ENCODE measurements at regions of chr11 and their contacts with region 1.

Region 1: DNA sequence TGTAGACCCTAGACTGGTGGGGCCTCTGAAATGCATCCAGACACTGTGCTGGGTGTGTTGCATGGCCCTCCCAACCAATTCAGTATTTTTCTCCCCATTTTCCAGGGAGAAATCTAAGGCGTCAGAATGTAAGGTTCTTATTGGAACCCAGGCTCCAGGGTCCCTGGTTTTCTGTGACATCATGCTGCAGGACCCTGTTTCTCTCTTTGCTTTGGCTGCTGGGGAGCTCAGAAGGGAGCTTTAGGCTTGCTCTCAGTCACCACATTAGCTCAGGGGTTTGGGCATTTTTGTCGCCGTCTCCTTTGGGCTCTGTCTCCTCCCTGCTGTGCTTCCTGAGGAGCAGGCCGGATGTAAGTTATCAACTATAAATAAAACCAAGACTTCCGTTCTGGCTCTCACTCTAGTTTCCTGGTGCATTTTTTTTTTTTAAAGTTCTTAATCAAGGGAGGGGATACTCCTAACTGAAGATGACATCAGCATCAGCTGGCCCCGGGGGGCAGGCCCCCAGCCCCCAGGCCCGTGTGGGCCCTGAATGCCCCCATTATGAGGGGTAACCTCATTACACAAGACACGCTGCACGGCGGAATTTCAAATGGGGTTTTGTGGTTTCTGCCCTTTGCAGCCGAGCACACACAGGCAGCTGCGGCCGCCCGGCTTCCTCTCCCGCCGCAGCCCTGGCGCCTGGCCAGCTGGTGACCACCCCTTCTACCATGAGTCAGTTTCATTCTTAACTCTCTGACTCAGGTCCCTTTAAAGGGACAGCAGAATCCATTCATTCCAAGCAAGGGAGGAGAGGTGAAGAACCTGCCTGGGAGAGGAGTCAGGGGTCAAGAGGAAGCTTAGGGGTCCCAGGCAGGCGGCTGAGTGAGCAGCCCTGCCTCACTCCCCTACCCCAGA is 3.2 kb downstream of the MYEOV start:
- DNase-seq: peak; percentile 88
- ATAC-seq: peak; percentile 37
- H3K4me3 ChIP-seq: peak overlapping the region; percentile 8 to 60 (median 41)
- H3K4me3 Mint-ChIP-seq: peak overlapping the region; percentile 85
- H3K27ac ChIP-seq: peak overlapping the region; percentile 95 to 99
- H3K27ac Mint-ChIP-seq: peak overlapping the region; percentile 93
- H3K4me1 ChIP-seq: peaks cover 66 to 74% of the 10 kb centered on the region in 2 donors
- H3K4me1 Mint-ChIP-seq: peaks cover 78% of the 10 kb centered on the region
- H3K27me3 ChIP-seq: no peaks in the 10 kb centered on the region
- H3K27me3 Mint-ChIP-seq: no peaks in the 10 kb centered on the region
- CTCF ChIP-seq: no peak

Region 2: DNA sequence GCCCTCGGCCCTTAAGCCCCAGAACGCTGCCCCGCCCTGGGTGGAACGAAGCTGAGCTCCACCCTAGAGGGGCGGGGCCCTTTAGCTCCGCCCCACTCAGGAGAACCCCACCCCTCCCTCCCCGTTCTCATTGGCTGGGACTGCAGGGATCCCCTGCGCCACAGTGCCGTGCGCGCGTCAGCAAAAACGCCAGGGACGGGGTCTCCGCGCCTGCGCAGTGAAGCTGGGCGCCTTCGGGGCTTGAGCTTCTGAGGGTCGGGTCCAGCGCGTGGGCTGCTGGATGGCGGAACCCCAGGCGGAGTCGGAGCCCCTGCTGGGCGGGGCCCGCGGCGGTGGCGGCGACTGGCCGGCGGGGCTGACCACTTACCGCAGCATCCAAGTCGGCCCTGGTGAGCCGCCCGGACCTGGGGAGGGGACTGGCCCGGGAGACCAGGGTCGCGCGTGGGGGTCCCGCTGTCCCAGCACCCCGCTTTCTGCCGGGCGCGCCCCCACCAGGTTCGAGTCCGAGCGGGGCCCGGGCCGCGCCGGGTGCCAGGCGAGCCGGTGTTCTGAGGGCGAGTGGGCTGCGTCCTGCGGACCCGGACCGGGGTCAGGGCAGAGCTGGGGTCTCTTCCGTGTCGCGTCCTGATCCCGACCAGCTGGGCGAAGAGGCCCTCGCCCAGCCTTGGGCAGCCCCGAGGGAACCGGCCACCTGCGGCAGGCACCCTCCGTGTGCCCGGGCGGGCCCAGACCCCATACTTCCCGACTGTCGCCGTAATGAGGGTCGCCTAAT is 248.2 kb before region 1 on chr11 and contains the start of gene TPCN2:
- CTCF ChIA-PET with region 1: no interaction called
- POLR2A ChIA-PET with region 1: interaction called, 3 read pairs
- intact Hi-C with region 1: loop called (anchors 2 kb)
- DNase-seq: peak; percentile 97
- ATAC-seq: peak; percentile 98
- H3K4me3 ChIP-seq: peak within 1 kb of the TSS; percentile 34 to 99 (median 86)
- H3K4me3 Mint-ChIP-seq: peak within 1 kb of the TSS; percentile 85
- H3K27ac ChIP-seq: peak within 1 kb of the TSS; percentile 75 to 98
- H3K27ac Mint-ChIP-seq: peak within 1 kb of the TSS; percentile 82
- H3K4me1 ChIP-seq: peaks cover 17 to 54% of the 10 kb centered on the region in 2 donors
- H3K4me1 Mint-ChIP-seq: peaks cover 38% of the 10 kb centered on the region
- H3K27me3 ChIP-seq: no peaks in the 10 kb centered on the region
- H3K27me3 Mint-ChIP-seq: peaks cover 9% of the 10 kb centered on the region
- CTCF ChIP-seq: no peak
- total RNA-seq, gene TPCN2: 71.4 and 76.2 TPM in 2 replicates

Region 3: GRCh38 chr11:69101115-69101791 is 195.9 kb before region 1 on chr11:
- CTCF ChIA-PET with region 1: interaction called, 3 read pairs
- POLR2A ChIA-PET with region 1: no interaction called
- intact Hi-C with region 1: loop called (anchors 2 kb)
- DNase-seq: peak; percentile 83
- ATAC-seq: peak; percentile 98
- H3K4me3 ChIP-seq: no peak overlapping the region
- H3K4me3 Mint-ChIP-seq: no peak overlapping the region
- H3K27ac ChIP-seq: no peak overlapping the region
- H3K27ac Mint-ChIP-seq: no peak overlapping the region
- H3K4me1 ChIP-seq: peaks cover 0 to 3% of the 10 kb centered on the region in 2 donors
- H3K4me1 Mint-ChIP-seq: peaks cover 2% of the 10 kb centered on the region
- H3K27me3 ChIP-seq: peaks cover 0 to 8% (median 2%) of the 10 kb centered on the region in 4 experiments
- H3K27me3 Mint-ChIP-seq: peaks cover 2% of the 10 kb centered on the region
- CTCF ChIP-seq: peak; percentile 99

Region 4: GRCh38 chr11:69343401-69344321 is 46.5 kb after region 1 on chr11:
- CTCF ChIA-PET with region 1: no interaction called
- POLR2A ChIA-PET with region 1: no interaction called
- intact Hi-C with region 1: no loop called
- DNase-seq: no peak
- ATAC-seq: no peak
- H3K4me3 ChIP-seq: no peak overlapping the region
- H3K4me3 Mint-ChIP-seq: no peak overlapping the region
- H3K27ac ChIP-seq: no peak overlapping the region
- H3K27ac Mint-ChIP-seq: peak overlapping the region; percentile 34
- H3K4me1 ChIP-seq: no peaks in the 10 kb centered on the region
- H3K4me1 Mint-ChIP-seq: peaks cover 3% of the 10 kb centered on the region
- H3K27me3 ChIP-seq: peaks cover 0 to 3% (median 0%) of the 10 kb centered on the region in 4 experiments
- H3K27me3 Mint-ChIP-seq: no peaks in the 10 kb centered on the region
- CTCF ChIP-seq: no peak

Region 5: DNA sequence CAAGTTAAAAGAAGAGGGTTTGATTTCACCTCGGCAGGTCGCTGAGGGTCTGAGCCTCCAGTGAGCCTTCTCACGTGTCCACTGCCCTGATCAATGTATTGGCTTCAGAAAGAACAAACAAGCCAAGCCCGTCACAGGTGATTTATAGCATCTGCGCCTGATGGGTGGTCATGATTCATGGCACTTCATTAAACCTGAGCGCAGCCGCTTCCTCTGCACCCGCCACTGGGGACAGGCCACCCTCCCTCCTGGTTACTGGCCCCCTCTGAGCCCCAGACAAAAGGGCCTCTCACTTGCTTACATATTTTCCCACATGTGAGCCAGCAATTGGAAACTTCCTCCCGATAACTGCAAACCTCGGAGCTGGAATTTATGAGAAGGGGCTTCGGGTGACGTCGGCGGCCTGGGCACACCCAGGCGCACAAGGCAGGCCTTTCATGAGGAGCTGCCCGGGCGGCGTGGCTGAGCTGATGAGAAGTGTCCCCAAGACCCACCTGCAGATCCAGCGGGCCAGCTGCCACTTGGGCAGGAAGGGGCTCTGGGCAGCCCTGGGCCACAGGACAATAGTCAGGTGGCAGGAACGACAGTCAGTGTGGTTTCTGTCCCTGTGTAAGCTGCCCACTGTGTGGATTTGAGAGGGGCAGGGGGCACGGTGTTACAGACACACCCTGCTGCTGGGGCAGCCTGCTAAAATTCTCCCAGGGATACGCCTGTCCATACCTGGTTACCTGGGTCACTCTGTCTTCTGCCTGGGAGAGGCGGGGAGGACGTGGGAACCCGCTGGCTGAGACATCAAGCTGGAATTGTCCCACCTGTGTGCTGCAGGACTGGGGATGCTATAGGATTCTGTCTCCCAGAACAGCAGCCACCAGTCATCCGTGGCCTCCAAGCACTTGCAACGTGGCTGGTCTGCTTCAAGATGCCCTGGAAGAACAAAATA is 120.3 kb after region 1 on chr11:
- CTCF ChIA-PET with region 1: no interaction called
- POLR2A ChIA-PET with region 1: no interaction called
- intact Hi-C with region 1: no loop called
- DNase-seq: no peak
- ATAC-seq: no peak
- H3K4me3 ChIP-seq: no peak overlapping the region
- H3K4me3 Mint-ChIP-seq: no peak overlapping the region
- H3K27ac ChIP-seq: no peak overlapping the region
- H3K27ac Mint-ChIP-seq: no peak overlapping the region
- H3K4me1 ChIP-seq: no peaks in the 10 kb centered on the region
- H3K4me1 Mint-ChIP-seq: no peaks in the 10 kb centered on the region
- H3K27me3 ChIP-seq: peaks cover 0 to 12% (median 5%) of the 10 kb centered on the region in 4 experiments
- H3K27me3 Mint-ChIP-seq: peaks cover 9% of the 10 kb centered on the region
- CTCF ChIP-seq: no peak

Region 6: DNA sequence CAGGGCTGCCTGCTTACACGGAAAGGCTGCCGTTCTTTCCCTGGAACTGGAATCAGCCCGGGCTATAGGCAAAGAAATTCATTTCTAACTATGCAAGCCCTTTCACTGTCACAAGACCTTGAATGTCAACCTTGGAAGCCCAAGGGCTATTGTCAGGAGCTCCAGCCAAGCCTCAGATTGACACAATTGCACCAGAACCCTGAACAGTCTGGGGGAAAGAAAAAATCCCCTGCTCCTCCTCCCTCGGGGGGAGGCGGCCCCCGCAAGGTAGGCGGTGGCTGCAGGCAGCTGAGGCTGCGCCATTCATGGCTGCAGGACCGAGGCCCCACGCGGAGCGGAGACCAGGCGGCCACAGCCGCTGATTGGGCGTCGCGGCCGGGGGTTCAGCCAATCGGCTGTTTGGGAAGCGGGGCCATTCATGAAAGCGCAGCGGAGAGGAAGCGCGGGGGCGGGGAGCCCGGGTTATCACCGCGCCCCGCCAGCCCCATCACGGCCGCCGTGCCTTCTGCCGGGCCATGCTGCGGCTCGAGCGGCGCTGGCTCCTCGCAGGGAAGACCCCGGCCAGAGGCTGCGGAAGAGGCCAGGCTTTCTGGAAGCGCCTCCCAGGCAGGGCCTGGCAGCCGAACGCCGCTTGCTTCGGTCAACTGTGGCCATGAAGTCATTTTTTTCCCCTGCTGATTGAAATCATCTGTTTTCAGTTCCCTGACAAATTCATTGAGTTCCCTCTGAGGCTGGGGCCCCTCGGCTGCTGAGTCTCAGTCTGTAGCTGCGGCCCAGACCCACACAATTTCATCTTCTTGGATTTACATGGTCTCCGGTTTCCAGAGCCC is 146.2 kb after region 1 on chr11:
- CTCF ChIA-PET with region 1: interaction called, 3 read pairs
- POLR2A ChIA-PET with region 1: no interaction called
- intact Hi-C with region 1: loop called (anchors 1 kb)
- DNase-seq: peak; percentile 82
- ATAC-seq: peak; percentile 97
- H3K4me3 ChIP-seq: peak overlapping the region in 4 of 5 experiments; percentile 34 to 54 (median 50)
- H3K4me3 Mint-ChIP-seq: peak overlapping the region; percentile 80
- H3K27ac ChIP-seq: peak overlapping the region in 1 of 2 donors; percentile 37
- H3K27ac Mint-ChIP-seq: no peak overlapping the region
- H3K4me1 ChIP-seq: peaks cover 14 to 17% of the 10 kb centered on the region in 2 donors
- H3K4me1 Mint-ChIP-seq: peaks cover 16% of the 10 kb centered on the region
- H3K27me3 ChIP-seq: peaks cover 0 to 2% (median 0%) of the 10 kb centered on the region in 4 experiments
- H3K27me3 Mint-ChIP-seq: peaks cover 3% of the 10 kb centered on the region
- CTCF ChIP-seq: no peak

Region 7: DNA sequence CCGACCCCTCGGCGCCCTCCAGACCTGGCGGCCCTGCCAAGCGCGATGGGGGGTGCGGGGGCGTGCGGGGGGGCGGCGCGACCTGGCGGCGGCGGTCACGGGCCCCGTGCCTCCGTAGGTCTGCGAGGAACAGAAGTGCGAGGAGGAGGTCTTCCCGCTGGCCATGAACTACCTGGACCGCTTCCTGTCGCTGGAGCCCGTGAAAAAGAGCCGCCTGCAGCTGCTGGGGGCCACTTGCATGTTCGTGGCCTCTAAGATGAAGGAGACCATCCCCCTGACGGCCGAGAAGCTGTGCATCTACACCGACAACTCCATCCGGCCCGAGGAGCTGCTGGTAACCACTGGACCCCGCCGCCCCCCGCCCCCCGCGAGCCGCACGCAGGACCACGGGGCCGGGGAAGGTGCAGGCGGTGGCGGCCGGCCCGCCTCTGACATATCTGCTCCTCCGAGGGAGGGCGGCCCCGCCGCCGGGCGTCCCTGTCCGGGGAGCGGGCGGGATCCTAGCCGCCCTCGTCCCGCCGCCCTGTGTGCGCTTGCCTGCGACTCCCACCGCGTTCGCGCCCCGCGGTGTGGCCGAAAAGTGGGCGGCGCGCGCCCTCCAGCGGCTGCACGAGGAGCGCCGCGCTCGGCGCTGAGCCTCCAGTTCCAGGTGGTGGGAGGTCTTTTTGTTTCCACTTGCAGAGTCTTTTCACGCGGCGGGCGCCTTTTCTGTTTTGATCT is 345.9 kb after region 1 on chr11:
- CTCF ChIA-PET with region 1: interaction called, 52 read pairs
- POLR2A ChIA-PET with region 1: interaction called, 4 read pairs
- intact Hi-C with region 1: loop called (anchors 1 kb)
- DNase-seq: peak; percentile 90
- ATAC-seq: peak; percentile 74
- H3K4me3 ChIP-seq: peak overlapping the region; percentile 58 to 81 (median 76)
- H3K4me3 Mint-ChIP-seq: peak overlapping the region; percentile 88
- H3K27ac ChIP-seq: peak overlapping the region; percentile 16 to 64
- H3K27ac Mint-ChIP-seq: peak overlapping the region; percentile 83
- H3K4me1 ChIP-seq: peaks cover 32 to 42% of the 10 kb centered on the region in 2 donors
- H3K4me1 Mint-ChIP-seq: peaks cover 40% of the 10 kb centered on the region
- H3K27me3 ChIP-seq: peaks cover 0 to 27% (median 19%) of the 10 kb centered on the region in 4 experiments
- H3K27me3 Mint-ChIP-seq: peaks cover 19% of the 10 kb centered on the region
- CTCF ChIP-seq: peak; percentile 97

Region 8: DNA sequence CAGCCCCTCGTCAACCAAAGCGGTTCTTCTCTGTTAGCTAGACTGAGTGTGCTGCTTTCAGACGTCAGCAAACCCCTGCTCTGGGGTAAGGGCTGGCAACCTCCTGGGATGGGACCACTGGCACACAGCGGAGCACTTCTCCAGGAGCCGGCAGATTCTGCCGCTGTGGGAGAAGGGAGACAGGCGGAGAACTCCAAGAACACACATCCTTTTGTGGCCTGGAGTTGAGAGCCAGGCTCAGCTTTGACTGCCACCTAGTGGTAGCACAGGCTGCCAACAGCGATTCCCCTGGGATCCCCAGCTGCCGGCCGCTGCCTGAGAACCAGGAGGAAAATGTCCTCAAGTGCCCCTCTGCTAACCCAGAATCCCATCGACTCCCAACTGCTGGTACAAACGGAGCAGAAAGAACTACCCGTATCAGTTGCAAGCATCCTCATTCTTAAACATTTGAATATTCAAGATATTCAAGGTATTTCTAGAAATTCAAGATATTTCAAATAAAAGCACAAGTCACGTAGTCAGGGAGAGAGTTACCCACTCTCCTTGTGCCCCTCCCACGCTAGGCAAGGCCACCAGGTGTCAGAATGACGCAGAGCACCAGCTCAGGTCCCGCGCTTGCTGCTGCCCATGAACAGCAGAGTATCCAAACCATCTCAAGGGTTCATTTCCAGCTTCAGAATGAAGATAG is 373.2 kb after region 1 on chr11:
- CTCF ChIA-PET with region 1: interaction called, 8 read pairs
- POLR2A ChIA-PET with region 1: no interaction called
- intact Hi-C with region 1: loop called (anchors 10 kb)
- DNase-seq: peak; percentile 81
- ATAC-seq: peak; percentile 35
- H3K4me3 ChIP-seq: no peak overlapping the region
- H3K4me3 Mint-ChIP-seq: no peak overlapping the region
- H3K27ac ChIP-seq: no peak overlapping the region
- H3K27ac Mint-ChIP-seq: peak overlapping the region; percentile 70
- H3K4me1 ChIP-seq: peaks cover 16 to 21% of the 10 kb centered on the region in 2 donors
- H3K4me1 Mint-ChIP-seq: peaks cover 33% of the 10 kb centered on the region
- H3K27me3 ChIP-seq: no peaks in the 10 kb centered on the region
- H3K27me3 Mint-ChIP-seq: no peaks in the 10 kb centered on the region
- CTCF ChIP-seq: peak; percentile 94